Cardiac septum (tissue), 1 donor: ENCODE measurements at regions of chr1 and their contacts with region 1.

Region 1: GRCh38 chr1:225772323-225772768 is 5.3 kb upstream of the SRP9 start:
- DNase-seq: peak; percentile 89

Region 2: DNA sequence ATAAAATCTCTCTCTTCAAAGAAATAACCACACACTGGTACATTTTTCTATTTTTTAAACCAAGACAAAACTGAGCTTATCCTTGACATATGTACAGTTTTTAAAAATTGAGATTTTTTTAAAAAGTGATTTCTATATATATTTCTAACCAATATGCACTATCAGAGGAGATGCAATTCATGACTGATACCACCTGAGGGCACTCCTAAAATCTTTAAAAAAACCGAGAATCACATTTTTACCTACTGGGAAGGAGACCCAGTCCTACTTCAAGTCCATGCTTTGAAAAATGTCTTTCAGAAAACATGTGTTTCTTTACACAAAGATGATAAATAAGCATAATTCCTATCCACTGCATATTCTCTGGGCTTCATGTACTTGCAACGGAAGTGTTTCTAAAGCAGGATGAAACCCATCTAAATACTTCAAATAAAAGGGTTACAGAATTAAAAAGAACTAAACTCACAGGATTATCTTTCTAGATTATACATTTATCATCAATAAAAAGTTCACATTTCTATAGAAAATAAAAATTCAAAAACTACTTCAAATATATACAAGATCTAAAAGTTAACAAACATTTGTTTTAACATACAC is 218.0 kb before region 1 on chr1:
- intact Hi-C with region 1: loop called (anchors 1 kb)
- DNase-seq: no peak

Region 3: GRCh38 chr1:225567590-225568194 is 204.7 kb before region 1 on chr1:
- intact Hi-C with region 1: loop called (anchors 5 kb)
- DNase-seq: no peak